Naive thymus-derived CD4-positive, alpha-beta T cell (primary cell): ENCODE measurements at regions of chr15 and their contacts with region 1.

Region 1: GRCh38 chr15:38554354-38554753 is 10.3 kb downstream of the RASGRP1 start:
- DNase-seq: peak in 2 of 9 donors; percentile 30 to 41
- ATAC-seq: peak; percentile 60
- H3K4me3 ChIP-seq: peak overlapping the region; percentile 19
- H3K4me3 Mint-ChIP-seq: peak overlapping the region; percentile 19 to 97 (median 72)
- H3K27ac ChIP-seq: peak overlapping the region; percentile 91
- H3K27ac Mint-ChIP-seq: peak overlapping the region; percentile 73 to 98 (median 89)
- H3K4me1 ChIP-seq: peaks cover 84 to 89% of the 10 kb centered on the region in 2 donors
- H3K4me1 Mint-ChIP-seq: peaks cover 62 to 95% (median 93%) of the 10 kb centered on the region in 7 donors
- H3K27me3 ChIP-seq: no peaks in the 10 kb centered on the region
- H3K27me3 Mint-ChIP-seq: no peaks in the 10 kb centered on the region

Region 2: GRCh38 chr15:38538372-38539343 is 15.7 kb before region 1 on chr15:
- CTCF ChIA-PET with region 1: interaction called, 8 read pairs
- POLR2A ChIA-PET with region 1: interaction called, 4 read pairs
- intact Hi-C with region 1: loop called (anchors 1 to 2 kb)
- DNase-seq: peak in 6 of 9 donors; percentile 25 to 50 (median 33)
- ATAC-seq: peak; percentile 62
- H3K4me3 ChIP-seq: peak overlapping the region; percentile 22
- H3K4me3 Mint-ChIP-seq: peak overlapping the region; percentile 55 to 86 (median 77)
- H3K27ac ChIP-seq: peak overlapping the region; percentile 63
- H3K27ac Mint-ChIP-seq: peak overlapping the region; percentile 79 to 99 (median 94)
- H3K4me1 ChIP-seq: peaks cover 81 to 83% of the 10 kb centered on the region in 2 donors
- H3K4me1 Mint-ChIP-seq: peaks cover 82 to 98% (median 97%) of the 10 kb centered on the region in 7 donors
- H3K27me3 ChIP-seq: no peaks in the 10 kb centered on the region
- H3K27me3 Mint-ChIP-seq: no peaks in the 10 kb centered on the region